ENCODE measurements at regions of chr9 and their contacts with region 1.

Region 1: GRCh38 chr9:2662496-2662895 is 40.9 kb downstream of the VLDLR start:
- DNase-seq: peak in 9 of 10 donors; percentile 7 to 67 (median 56)
- H3K4me3 ChIP-seq: peak overlapping the region in 3 of 59 donors; percentile 6 to 42 (median 28)
- H3K27ac ChIP-seq: peak overlapping the region in 16 of 59 donors; percentile 2 to 69 (median 26)
- H3K27me3 ChIP-seq: no peaks in the 10 kb centered on the region
- CTCF ChIP-seq: peak in 52 of 56 donors; percentile 25 to 79 (median 52)

Region 2: GRCh38 chr9:2228132-2228531 is 434.4 kb before region 1 on chr9:
- intact Hi-C with region 1: loop called in 1 of 2 experiments (anchors 2 kb)
- DNase-seq: peak in 6 of 10 donors; percentile 8 to 57 (median 42)
- H3K4me3 ChIP-seq: no peak overlapping the region
- H3K27ac ChIP-seq: no peak overlapping the region
- H3K27me3 ChIP-seq: no peaks in the 10 kb centered on the region
- CTCF ChIP-seq: peak in 54 of 56 donors; percentile 21 to 72 (median 48)

Region 3: DNA sequence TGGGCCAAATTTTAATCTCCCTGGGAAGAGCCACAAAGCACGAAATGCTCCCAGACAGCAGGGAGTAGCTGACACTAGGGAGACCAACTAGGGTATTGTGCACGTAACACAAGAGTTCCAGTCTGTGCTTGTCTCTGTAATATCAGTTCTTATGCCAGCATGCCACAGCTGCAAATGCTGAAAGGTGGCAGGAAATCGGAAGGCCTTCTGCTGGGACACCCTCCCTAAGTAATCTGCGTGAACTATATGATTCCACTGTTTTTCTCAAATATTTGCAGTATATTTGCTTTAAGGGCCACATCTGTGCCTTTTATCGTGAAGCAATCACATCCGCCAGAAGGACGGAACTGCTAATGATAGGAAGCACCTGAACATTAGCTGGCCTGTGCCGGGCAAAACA is 28.3 kb before region 1 on chr9:
- intact Hi-C with region 1: no loop called
- DNase-seq: peak in 4 of 10 donors; percentile 19 to 43 (median 40)
- H3K4me3 ChIP-seq: peak overlapping the region in 40 of 59 donors; percentile 2 to 58 (median 28)
- H3K27ac ChIP-seq: peak overlapping the region; percentile 67 to 97 (median 91)
- H3K27me3 ChIP-seq: no peaks in the 10 kb centered on the region
- CTCF ChIP-seq: peak in 2 of 56 donors; percentile 20 to 29

Measured in dorsolateral prefrontal cortex (tissue), 120 donors.